GM18951 (cell line): ENCODE measurements at regions of chr2 and their contacts with region 1.

Region 1: DNA sequence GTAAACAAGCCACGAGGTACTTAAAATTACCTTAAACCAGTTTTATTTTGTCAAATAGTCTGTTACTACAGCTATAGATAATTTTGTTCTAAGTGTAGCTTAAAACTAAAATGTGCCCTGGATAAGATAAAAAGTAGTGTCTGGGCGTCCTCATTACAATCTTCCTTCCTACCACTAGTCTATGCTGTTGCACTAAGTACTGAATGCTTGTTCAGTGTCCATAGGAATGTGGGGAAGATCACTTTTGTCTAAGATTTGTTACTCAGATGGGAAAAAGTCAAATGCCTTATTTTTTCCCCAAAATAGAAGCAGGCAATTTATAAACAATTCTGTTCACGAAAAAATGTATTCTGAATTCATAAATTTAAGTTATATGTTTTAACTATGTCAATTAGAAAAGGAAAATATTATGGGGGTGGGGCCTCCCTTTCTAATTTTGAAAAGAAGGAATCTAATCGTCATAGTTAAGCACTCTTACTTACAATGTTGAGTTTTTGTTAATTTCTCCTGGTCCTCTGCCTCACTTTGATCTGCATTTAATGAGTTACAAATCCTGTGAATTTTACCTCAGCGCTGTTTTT is 140.4 kb upstream of the VRK2 start:
- POLR2A ChIP-seq: no peak

Region 2: DNA sequence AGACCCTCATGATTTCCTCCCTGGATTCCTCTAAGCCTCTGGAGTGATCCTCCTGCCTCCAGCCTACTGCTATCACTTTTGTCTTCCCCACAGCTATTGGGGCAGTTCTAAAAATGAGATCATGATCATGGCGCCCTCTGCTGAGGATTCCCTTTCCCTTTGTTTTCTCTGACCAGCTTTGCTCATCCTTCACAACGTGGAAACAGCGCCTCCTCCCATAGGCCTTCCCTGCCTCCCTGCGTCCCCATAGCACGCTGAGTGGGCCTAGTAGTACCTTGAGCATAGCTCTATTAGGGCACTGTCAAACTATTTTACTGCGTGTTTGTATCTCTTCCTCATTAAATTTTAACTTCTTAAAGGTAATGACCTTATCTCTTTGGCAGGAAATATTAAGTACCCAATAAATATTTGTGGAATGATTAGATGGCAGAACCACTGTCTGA is 541.8 kb after region 1 on chr2:
- in situ Hi-C with region 1: loop called (anchors 25 kb)
- POLR2A ChIP-seq: no peak